ENCODE measurements at regions of chr1 and their contacts with region 1.

Region 1: DNA sequence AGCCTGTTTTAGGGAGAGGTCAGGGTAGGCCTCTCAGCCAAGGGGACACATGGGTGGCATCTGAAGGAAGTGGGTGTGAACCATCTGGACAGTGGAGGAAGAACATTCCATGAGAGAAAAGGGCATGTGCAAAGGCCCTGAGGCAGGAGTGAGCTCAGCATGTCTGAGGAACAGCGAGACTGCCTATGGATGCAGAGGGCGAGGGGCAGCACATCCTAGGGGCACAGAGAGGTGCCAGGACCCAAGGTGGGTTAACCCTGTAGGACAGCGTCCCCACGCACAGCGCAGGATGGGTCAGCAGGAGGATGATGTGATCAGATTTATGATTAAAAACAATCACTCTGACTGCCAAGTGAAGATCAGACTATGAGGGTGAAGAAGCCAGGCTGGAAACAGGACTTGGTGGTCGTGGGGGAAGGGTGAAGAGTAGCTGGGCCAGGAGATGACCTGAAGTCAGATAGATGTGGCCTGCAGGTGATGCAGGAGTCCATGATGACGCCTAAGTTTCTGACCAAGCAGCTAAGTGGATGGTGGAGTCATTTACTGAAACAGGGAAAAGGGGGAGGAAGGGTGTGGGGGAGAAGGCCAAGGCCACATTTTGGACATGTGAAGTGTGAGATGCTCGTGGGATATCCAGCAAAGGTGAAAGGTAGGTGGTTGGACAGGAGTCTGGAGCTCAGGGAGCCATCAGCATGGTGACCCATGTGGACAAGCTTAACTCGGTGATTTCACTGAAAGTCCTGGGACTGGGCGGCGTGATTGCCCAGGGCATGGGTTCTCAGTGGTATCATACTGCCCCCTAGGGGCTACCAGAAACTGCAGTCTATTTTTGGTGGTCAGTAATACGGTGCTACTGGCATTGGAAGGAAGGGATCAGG is 37.8 kb downstream of the PABPC4 start:
- DNase-seq: peak; percentile 42 to 70
- ATAC-seq: peak; percentile 79 to 92 (median 87)
- H3K4me3 ChIP-seq: no peak overlapping the region
- H3K27ac ChIP-seq: no peak overlapping the region
- H3K4me1 ChIP-seq: peaks cover 0 to 30% (median 18%) of the 10 kb centered on the region in 9 donors
- H3K27me3 ChIP-seq: no peaks in the 10 kb centered on the region
- CTCF ChIP-seq: peak; percentile 88 to 94 (median 92)

Region 2: GRCh38 chr1:39317910-39318633 is 220.8 kb before region 1 on chr1:
- intact Hi-C with region 1: loop called in 1 of 10 experiments (anchors 10 kb)
- DNase-seq: peak in 1 of 2 donors; percentile 30
- ATAC-seq: peak; percentile 57 to 90 (median 77)
- H3K4me3 ChIP-seq: no peak overlapping the region
- H3K27ac ChIP-seq: peak overlapping the region in 4 of 10 donors; percentile 7 to 73 (median 48)
- H3K4me1 ChIP-seq: peaks cover 0 to 20% (median 4%) of the 10 kb centered on the region in 9 donors
- H3K27me3 ChIP-seq: no peaks in the 10 kb centered on the region
- CTCF ChIP-seq: no peak

Region 3: DNA sequence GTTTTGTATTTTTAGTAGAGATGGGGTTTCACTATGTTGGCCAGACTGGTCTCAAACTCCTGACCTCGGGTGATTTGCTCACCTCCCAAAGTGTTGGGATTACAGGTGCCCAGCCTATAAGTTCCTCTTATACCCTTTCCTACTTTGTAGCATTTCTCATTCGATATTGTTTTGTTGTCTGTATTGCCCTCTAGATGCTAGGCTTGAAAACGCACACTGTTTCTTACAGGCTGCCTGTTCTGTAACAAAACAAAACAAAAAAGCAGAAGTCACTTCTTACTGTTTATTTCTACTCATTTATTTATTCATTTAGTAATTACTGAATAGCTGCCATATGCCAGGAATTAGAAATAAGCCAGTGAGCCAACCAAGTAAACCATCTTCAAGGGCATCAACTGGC is 184.3 kb before region 1 on chr1:
- intact Hi-C with region 1: loop called in 4 of 10 experiments (anchors 10 kb)
- DNase-seq: no peak
- ATAC-seq: no peak
- H3K4me3 ChIP-seq: no peak overlapping the region
- H3K27ac ChIP-seq: no peak overlapping the region
- H3K4me1 ChIP-seq: peaks cover 0 to 14% (median 8%) of the 10 kb centered on the region in 9 donors
- H3K27me3 ChIP-seq: no peaks in the 10 kb centered on the region
- CTCF ChIP-seq: peak in 1 of 9 donors; percentile 8

Region 4: DNA sequence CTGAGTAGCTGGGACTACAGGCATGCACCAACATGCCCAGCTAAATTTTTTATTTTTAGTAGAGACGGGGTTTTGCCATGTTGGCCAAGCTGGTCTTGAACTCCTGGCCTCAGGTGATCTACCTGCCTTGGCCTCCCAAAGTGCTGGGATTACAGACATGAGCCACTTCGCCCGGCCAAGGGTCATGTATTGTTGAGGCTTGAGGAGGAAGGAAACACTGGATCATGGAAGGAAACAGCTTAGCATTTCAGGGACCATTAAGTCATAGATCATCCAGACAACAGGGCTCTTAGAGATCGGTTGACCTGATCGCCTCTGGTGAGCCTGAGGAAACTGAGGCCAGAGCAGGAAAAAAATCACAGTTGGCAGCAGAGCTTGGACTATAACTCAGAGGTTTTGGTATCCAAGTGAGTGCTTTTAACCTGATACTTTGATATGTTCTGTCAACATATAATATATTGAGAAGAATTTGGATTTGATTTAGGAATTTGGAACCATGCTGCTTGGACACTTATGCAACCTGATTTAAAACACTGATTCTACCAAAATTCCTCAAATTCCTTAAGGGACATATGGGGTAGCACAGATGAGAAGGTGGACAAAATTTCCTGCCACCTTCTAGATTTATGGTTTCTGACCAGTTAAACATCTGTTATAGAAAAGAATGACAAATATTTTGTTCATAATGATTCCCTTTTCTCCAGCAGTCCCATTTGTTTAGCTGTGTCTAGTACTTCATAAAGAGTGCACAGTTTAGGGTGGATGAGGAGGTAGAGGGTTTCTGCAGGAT is 60.5 kb before region 1 on chr1:
- intact Hi-C with region 1: loop called in 2 of 10 experiments (anchors 5 to 10 kb)
- DNase-seq: no peak
- ATAC-seq: no peak
- H3K4me3 ChIP-seq: no peak overlapping the region
- H3K27ac ChIP-seq: no peak overlapping the region
- H3K4me1 ChIP-seq: peaks cover 0 to 20% (median 3%) of the 10 kb centered on the region in 9 donors
- H3K27me3 ChIP-seq: no peaks in the 10 kb centered on the region
- CTCF ChIP-seq: no peak

Region 5: DNA sequence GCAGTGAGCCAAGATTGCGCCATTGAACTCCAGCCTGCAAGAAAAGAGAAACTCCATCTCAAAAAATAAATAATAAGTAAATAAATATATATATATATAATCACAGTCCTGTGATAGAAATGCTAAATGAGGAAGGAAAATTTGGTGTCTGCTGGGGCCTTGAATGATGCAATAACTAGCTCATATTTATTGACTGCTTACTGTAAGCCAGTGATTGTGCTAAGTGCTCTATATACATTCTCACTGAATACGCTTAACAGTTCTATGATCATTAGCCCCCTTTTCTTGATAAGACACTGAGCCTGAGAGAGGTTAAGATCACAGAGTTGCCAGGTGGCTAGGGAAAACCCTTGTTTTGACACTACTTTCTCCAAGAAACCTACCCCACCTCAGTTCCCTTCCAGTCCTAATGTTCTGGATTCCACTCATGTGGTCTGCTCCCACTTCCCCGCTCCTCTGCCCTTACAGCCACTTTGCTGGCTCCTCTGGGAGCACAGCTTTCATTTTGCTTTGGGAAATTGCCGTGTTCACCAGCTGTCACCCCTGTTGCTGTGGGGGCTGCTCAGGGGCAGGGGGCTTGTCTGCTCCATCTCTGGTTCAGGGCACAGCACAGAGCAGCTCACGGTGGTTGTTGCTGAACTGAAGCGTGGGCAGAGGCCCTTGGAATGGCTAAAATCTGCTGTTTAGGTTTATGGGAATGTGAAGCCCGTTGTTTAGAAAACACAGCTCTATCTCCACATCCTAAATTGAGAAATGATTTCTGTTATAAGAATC is 49.8 kb before region 1 on chr1:
- intact Hi-C with region 1: loop called in 1 of 10 experiments (anchors 10 kb)
- DNase-seq: no peak
- ATAC-seq: no peak
- H3K4me3 ChIP-seq: no peak overlapping the region
- H3K27ac ChIP-seq: peak overlapping the region in 1 of 10 donors; percentile 48
- H3K4me1 ChIP-seq: peaks cover 0 to 20% (median 10%) of the 10 kb centered on the region in 9 donors
- H3K27me3 ChIP-seq: peaks cover 6 to 35% (median 25%) of the 10 kb centered on the region in 7 donors
- CTCF ChIP-seq: no peak

Region 6: GRCh38 chr1:39973503-39974135 is 434.8 kb after region 1 on chr1:
- intact Hi-C with region 1: no loop called
- DNase-seq: peak; percentile 70 to 73
- ATAC-seq: peak; percentile 72 to 90 (median 78)
- H3K4me3 ChIP-seq: no peak overlapping the region
- H3K27ac ChIP-seq: no peak overlapping the region
- H3K4me1 ChIP-seq: peaks cover 0 to 6% (median 0%) of the 10 kb centered on the region in 9 donors
- H3K27me3 ChIP-seq: peaks cover 0 to 16% (median 0%) of the 10 kb centered on the region in 7 donors
- CTCF ChIP-seq: peak; percentile 89 to 99 (median 97)

Measured in heart right ventricle (tissue), 16 donors.